ENCODE measurements at regions of chr1 and their contacts with region 1.

Region 1: DNA sequence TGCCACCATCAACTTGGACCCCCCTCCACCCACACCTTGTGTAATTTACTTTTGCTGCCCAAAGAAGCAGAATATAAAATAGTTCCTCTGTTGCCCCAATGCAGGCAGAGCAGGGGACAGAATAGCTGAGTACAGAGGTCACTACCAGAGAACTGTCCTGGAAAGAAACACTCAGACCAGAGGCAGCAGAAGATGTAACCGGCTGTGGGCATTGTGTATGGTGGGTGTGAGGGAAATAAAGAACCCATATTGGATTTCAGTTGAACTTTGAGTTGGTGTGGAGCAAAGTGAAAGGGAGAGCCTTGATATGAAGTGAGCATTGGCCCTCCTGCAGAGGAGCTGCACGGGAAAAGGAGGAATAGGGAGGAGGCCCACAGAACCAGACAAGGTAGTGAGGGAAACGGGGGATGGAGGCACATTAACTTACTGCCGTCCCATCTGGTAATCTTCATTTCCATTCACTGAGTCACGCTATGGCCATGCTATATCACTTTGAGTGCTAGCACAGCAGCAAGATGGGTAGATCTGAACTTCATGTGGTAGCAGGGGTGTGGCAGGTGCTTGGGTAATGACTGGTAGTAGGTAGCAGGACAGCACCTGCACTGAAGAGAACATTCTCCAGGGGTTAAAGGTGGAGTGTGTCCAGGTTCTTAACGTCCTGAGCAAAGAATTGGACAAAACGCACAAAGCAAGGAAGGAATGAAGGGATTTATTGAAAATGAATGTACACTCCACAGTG is 56.3 kb upstream of the FBXO28 start:
- DNase-seq: no peak

Region 2: DNA sequence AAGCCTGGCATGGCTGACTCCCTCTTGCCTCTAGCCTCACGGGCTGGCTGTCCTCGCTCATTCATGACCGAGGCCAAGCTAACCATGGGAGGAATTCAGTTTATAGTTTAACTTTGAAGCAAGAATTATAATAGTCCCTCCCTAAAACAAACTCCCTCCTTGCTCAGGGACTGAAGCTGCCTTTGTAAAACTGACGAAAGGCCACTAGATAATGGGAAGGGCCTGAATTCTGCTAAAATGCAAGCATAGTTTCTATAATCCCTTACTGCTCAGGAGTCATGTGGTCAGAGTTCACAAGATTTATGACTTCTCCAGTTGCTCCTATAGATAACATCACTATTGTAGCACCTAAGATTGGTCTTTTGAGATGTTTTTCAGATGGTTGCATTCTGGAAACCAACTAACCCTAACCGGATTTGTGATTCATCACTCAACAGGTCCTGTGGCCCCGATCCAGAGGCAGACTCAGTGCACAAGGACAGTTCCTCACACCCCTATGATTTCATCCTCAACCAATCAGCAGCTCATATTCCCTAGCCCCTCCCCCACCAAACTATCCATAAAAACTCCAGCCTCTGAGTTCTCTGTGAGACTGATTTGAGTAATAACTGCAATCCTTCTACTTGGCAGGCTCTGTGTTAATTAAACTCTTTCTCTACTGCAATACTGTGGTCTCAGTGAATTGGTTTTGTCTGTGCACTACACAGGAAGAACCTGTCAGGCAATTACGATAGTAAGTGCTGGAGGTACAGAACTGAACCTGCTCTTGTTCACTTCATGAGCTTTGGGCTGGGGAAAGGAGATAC is 1536.1 kb before region 1 on chr1:
- intact Hi-C with region 1: no loop called
- DNase-seq: no peak

Region 3: GRCh38 chr1:223700942-223701637 is 356.5 kb before region 1 on chr1:
- intact Hi-C with region 1: loop called in 1 of 2 experiments (anchors 2 kb)
- DNase-seq: peak; percentile 89